BJ (cell line): ENCODE measurements at regions of chr2 and their contacts with region 1.

Region 1: GRCh38 chr2:85066874-85067351 is 66.3 kb upstream of the TCF7L1 start:
- DNase-seq: peak; percentile 9
- H3K4me3 ChIP-seq: no peak overlapping the region; the same call in 1 of the 2 replicates
- H3K27me3 ChIP-seq: peaks cover 4% of the 10 kb centered on the region; the same call in 1 of the 2 replicates
- CTCF ChIP-seq: peak; percentile 87

Region 2: DNA sequence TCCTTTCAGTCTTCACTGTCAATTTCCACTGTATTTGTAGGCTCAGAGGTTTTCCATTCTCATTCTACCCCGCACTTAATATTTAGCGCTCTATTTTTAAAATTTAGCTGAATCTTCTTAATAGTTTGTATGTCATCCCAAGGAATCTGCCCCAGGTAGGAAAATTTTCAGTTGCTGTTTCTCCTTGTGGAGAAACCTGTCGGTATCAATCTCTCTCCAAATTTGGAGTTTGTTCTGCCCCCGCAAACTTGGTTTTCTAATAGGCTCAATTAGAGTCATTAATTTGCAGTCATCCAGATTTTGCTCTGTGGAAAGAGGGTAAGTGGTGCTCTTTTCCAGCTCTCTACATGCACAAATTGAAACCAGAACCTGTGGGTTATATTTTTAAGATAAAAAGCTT is 463.0 kb before region 1 on chr2:
- CTCF ChIA-PET with region 1: no interaction called
- POLR2A ChIA-PET with region 1: no interaction called
- DNase-seq: no peak
- H3K4me3 ChIP-seq: no peak overlapping the region
- H3K27me3 ChIP-seq: peaks cover 3% of the 10 kb centered on the region; the same call in 1 of the 2 replicates
- CTCF ChIP-seq: no peak

Region 3: DNA sequence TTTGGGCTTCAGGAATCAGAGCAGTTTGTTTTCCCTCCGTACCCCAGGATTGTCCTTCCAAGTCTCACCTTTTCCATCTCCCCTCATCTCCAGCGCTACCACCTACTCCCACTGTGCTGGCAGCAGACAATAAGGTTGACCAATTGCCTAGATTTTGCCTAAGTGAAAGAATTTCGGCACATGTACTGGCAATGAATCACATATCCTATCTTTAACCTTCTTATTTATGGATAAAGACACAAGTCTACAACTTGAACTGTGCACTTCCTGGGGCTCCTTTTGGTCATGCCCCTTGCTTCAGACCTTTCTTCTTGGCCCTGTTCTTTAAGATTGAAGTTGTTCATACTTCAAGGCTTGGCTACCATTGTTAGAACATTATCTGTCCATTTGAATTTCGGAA is 24.6 kb before region 1 on chr2:
- CTCF ChIA-PET with region 1: interaction called, 14 read pairs
- POLR2A ChIA-PET with region 1: no interaction called
- DNase-seq: no peak
- H3K4me3 ChIP-seq: no peak overlapping the region
- H3K27me3 ChIP-seq: no peaks in the 10 kb centered on the region
- CTCF ChIP-seq: no peak

Region 4: GRCh38 chr2:85132834-85133637 is 66.1 kb after region 1 on chr2 and contains the start of gene TCF7L1:
- CTCF ChIA-PET with region 1: interaction called, 26 read pairs
- POLR2A ChIA-PET with region 1: no interaction called
- DNase-seq: peak; percentile 35
- H3K4me3 ChIP-seq: peak within 1 kb of the TSS; percentile 69
- H3K27me3 ChIP-seq: no peaks in the 10 kb centered on the region; the same call in 1 of the 2 replicates
- CTCF ChIP-seq: peak; percentile 96
- polyA plus RNA-seq, gene TCF7L1: 1.9 and 3.2 TPM in 2 replicates

Region 5: DNA sequence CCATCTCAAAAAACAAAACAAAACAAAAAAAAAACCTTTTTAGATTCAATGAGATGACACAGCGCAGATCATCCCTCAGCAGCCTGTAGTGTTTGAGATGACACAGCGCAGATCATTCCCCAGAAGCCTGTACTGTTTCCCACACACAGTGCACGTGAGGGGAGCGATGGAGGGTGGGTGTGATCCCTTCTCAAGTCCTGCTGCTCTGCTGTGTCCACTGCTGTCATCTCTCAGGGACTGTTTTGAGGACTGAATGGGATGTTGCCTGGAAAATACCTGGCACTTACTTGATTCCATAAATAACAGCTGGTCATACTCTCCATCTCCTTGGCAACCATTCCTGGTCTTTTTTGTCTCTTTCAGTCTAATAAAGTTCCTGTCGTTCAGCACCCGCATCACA is 235.2 kb after region 1 on chr2:
- CTCF ChIA-PET with region 1: interaction called, 195 read pairs
- POLR2A ChIA-PET with region 1: no interaction called
- DNase-seq: no peak
- H3K4me3 ChIP-seq: no peak overlapping the region
- H3K27me3 ChIP-seq: no peaks in the 10 kb centered on the region
- CTCF ChIP-seq: no peak